IMR-90 (cell line): ENCODE measurements at regions of chr6 and their contacts with region 1.

Region 1: GRCh38 chr6:19812512-19813119 is 24.6 kb upstream of the ID4 start:
- DNase-seq: peak; percentile 61
- ATAC-seq: peak; percentile 87
- H3K4me3 ChIP-seq: no peak overlapping the region
- H3K27ac ChIP-seq: no peak overlapping the region
- H3K4me1 ChIP-seq: no peaks in the 10 kb centered on the region
- H3K27me3 ChIP-seq: no peaks in the 10 kb centered on the region; the same call in 1 of the 2 replicates
- CTCF ChIP-seq: peak; percentile 67
- POLR2A ChIP-seq: no peak
- RAD21 ChIP-seq: peak; percentile 62

Region 2: DNA sequence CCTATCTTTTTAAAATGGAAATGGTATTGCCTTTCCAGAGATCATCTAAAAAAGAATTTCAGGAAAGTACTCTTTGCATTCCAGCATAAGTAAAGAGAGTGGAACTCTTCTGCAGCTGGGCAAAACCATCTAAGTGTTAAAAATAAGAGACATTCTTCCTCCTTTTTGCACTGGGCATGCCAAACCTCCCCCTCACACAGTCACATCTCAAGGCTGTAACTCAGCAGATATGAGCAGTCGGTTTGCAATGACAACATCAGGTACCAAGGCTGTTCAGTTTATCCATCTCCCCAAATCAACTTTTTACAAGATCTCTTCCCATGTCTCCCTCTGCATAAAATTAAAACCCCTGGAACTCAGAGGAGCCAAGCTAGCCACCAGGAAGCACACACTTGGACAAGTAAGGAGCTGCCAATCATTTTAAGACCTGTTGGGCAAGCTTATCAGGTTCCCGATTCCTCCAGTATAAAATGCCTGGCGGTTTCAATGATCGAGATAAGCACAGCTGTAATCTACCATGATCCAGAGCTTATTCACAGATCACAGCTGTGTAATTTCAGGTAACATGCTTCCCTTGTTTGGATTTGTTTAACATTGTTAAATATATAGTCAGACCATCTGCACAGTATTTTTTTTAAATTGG is 47.7 kb after region 1 on chr6:
- CTCF ChIA-PET with region 1: no interaction called
- POLR2A ChIA-PET with region 1: no interaction called
- dilution Hi-C with region 1: no loop called
- in situ Hi-C with region 1: no loop called
- intact Hi-C with region 1: loop called (anchors 1 kb)
- DNase-seq: no peak
- ATAC-seq: no peak
- H3K4me3 ChIP-seq: no peak overlapping the region
- H3K27ac ChIP-seq: no peak overlapping the region
- H3K4me1 ChIP-seq: no peaks in the 10 kb centered on the region
- H3K27me3 ChIP-seq: peaks cover 3% of the 10 kb centered on the region; the same call in 1 of the 2 replicates
- CTCF ChIP-seq: no peak
- POLR2A ChIP-seq: no peak
- RAD21 ChIP-seq: no peak